ENCODE measurements at regions of chr1 and their contacts with region 1.

Region 1: DNA sequence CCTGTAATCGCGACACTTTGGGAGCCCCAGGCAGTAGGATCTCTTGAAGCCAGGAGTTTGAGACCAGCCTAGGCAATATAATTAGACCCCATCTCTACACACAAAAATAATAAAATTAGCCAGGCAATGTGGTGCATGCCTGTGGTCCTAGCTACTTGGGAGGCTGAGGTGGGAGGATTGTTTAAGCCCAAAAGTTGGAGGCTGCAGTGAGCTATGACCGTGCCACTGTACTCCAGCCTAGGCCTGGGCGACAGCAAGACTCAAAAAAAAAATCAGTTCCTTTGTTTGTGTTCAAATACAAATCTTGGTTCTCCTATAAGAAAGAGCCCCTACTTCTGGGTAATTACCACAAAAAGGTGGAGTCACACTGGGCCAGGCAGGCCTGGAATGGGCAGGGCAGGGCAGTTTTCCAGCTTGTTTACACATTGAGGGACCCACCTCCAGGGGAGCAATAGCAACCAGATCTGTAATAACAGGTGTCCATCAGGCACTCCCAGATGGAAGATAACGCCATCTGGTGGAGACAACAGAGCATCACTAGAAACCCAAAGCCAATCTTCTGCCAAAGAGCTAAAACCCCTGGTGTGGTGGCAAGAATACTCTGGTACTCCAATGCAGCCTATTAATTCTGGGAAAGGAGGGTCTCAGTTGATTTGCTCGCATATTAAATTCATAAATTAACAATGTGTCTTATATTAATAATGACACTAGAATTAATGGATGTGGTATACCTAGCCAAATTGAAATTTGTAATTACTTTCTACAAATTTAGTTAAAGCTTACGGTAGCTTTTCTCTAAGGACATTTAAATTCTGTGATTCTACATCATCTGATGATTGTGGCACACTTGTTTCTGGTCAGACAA is 13.2 kb downstream of the PPP1R15B start:
- DNase-seq: peak; percentile 92
- H3K4me3 Mint-ChIP-seq: no peak overlapping the region
- H3K27ac Mint-ChIP-seq: no peak overlapping the region
- H3K4me1 Mint-ChIP-seq: peaks cover 17% of the 10 kb centered on the region
- H3K27me3 Mint-ChIP-seq: no peaks in the 10 kb centered on the region
- CTCF ChIP-seq: peak; percentile 92

Region 2: GRCh38 chr1:204108423-204109141 is 289.9 kb before region 1 on chr1:
- CTCF ChIA-PET with region 1: no interaction called
- intact Hi-C with region 1: no loop called
- DNase-seq: no peak
- H3K4me3 Mint-ChIP-seq: no peak overlapping the region
- H3K27ac Mint-ChIP-seq: no peak overlapping the region
- H3K4me1 Mint-ChIP-seq: peaks cover 37% of the 10 kb centered on the region
- H3K27me3 Mint-ChIP-seq: no peaks in the 10 kb centered on the region
- CTCF ChIP-seq: no peak

Region 3: GRCh38 chr1:204257954-204258752 is 140.3 kb before region 1 on chr1:
- CTCF ChIA-PET with region 1: interaction called, 11 read pairs
- intact Hi-C with region 1: no loop called
- DNase-seq: peak; percentile 80
- H3K4me3 Mint-ChIP-seq: no peak overlapping the region
- H3K27ac Mint-ChIP-seq: no peak overlapping the region
- H3K4me1 Mint-ChIP-seq: no peaks in the 10 kb centered on the region
- H3K27me3 Mint-ChIP-seq: no peaks in the 10 kb centered on the region
- CTCF ChIP-seq: peak; percentile 80

Region 4: GRCh38 chr1:204377795-204378608 is 20.4 kb before region 1 on chr1:
- CTCF ChIA-PET with region 1: interaction called, 83 read pairs
- intact Hi-C with region 1: loop called (anchors 1 kb)
- DNase-seq: peak; percentile 80
- H3K4me3 Mint-ChIP-seq: no peak overlapping the region
- H3K27ac Mint-ChIP-seq: peak overlapping the region; percentile 76
- H3K4me1 Mint-ChIP-seq: no peaks in the 10 kb centered on the region
- H3K27me3 Mint-ChIP-seq: no peaks in the 10 kb centered on the region
- CTCF ChIP-seq: no peak

Region 5: DNA sequence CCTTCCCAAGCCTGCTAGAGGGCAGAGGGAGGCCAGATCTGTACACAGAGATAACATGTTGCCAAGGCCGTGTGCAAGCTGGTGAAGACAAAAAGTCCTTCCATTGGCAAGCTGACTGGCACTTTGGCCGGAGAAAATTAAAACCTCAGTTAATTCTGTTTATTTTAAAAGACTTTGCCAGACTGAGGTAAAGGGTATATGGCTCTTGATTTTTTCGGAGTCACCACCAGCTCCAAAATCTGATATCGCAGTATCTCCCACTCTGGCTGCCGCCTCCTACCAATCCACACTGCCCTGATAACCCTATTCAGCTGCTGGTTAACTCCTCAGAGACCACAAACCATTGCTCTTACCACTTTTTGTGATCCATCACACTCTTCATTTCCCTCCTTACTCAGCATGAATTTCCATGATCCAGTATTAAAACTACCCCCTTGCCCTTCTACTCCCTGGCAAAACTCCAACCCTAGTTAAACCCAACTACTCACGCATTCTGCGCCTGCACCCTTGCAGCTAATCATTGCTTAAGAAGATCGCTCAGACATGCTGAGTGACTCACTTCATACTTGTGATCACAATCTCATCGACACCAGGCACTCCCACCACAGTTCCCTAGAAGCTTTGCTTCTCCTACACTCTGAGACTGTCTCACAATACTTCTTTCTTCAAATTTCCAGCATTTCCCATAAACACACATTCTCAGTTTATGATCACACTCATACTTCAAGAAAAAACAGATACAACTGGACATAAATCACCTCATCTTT is 19.0 kb after region 1 on chr1:
- CTCF ChIA-PET with region 1: interaction called, 19 read pairs
- intact Hi-C with region 1: no loop called
- DNase-seq: peak; percentile 83
- H3K4me3 Mint-ChIP-seq: peak overlapping the region; percentile 68
- H3K27ac Mint-ChIP-seq: peak overlapping the region; percentile 97
- H3K4me1 Mint-ChIP-seq: peaks cover 63% of the 10 kb centered on the region
- H3K27me3 Mint-ChIP-seq: no peaks in the 10 kb centered on the region
- CTCF ChIP-seq: no peak

Region 6: GRCh38 chr1:204506961-204507387 is 108.5 kb after region 1 on chr1:
- CTCF ChIA-PET with region 1: interaction called, 10 read pairs
- intact Hi-C with region 1: no loop called
- DNase-seq: peak; percentile 92
- H3K4me3 Mint-ChIP-seq: peak overlapping the region; percentile 71
- H3K27ac Mint-ChIP-seq: peak overlapping the region; percentile 100
- H3K4me1 Mint-ChIP-seq: peaks cover 45% of the 10 kb centered on the region
- H3K27me3 Mint-ChIP-seq: peaks cover 14% of the 10 kb centered on the region
- CTCF ChIP-seq: no peak